Mammary epithelial cell (primary cell): ENCODE measurements at regions of chr12 and their contacts with region 1.

Region 1: GRCh38 chr12:120971299-120972179 is 6.8 kb upstream of the HNF1A start:
- DNase-seq: peak; percentile 50
- H3K4me3 ChIP-seq: no peak overlapping the region
- H3K27ac ChIP-seq: no peak overlapping the region
- H3K4me1 ChIP-seq: no peaks in the 10 kb centered on the region
- H3K27me3 ChIP-seq: no peaks in the 10 kb centered on the region
- CTCF ChIP-seq: peak; percentile 80

Region 2: DNA sequence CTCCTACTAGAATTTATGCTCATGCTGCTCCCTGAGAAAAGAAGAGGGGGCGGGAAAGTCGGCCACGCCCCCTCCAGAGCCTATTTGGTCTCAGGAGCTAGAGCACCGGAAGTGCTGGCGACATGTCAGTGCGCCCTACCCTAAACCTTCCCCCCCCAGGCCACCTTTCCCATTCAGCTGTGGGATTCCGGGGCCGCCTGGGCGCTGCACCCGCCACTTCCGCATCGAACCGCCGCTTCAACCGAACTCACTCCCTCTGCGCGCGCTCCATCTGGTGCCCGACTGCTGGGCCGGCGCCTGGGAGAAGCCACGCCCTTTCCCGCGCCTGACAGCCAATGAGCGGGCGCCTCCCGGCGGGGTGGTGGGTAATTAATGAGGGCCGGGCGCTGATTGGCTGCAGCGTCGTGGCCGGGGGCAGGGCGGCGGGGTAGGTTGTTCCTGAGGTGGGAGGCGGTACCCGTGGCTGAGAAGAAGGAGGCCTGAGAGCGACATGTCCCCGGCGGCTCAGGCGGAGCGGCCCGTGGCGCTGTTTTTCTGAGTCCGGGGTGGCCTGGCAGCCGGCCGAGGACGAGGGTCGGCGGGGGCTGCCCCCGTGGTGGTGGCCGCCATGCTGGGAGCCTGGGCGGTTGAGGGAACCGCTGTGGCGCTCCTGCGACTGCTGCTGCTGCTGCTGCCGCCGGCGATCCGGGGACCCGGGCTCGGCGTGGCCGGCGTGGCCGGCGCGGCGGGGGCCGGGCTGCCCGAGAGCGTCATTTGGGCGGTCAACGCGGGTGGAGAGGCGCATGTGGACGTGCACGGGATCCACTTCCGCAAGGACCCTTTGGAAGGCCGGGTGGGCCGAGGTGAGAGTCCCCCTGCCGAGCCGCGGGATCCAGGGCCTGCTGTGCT is 284.6 kb before region 1 on chr12 and contains the start of gene MLEC:
- CTCF ChIA-PET with region 1: no interaction called
- dilution Hi-C with region 1: no loop called
- in situ Hi-C with region 1: no loop called
- intact Hi-C with region 1: loop called (anchors 1 kb)
- DNase-seq: peak; percentile 98
- H3K4me3 ChIP-seq: peak within 1 kb of the TSS; percentile 73 to 98 (median 82)
- H3K27ac ChIP-seq: peak within 1 kb of the TSS; percentile 89
- H3K4me1 ChIP-seq: peaks cover 28% of the 10 kb centered on the region
- H3K27me3 ChIP-seq: no peaks in the 10 kb centered on the region
- CTCF ChIP-seq: peak in 1 of 2 donors; percentile 24
- total RNA-seq, gene MLEC: 64.7 to 114 TPM

Region 3: GRCh38 chr12:120710031-120710804 is 261.3 kb before region 1 on chr12 and contains the start of gene UNC119B:
- CTCF ChIA-PET with region 1: no interaction called
- dilution Hi-C with region 1: no loop called
- in situ Hi-C with region 1: no loop called
- intact Hi-C with region 1: loop called (anchors 2 kb)
- DNase-seq: peak; percentile 50
- H3K4me3 ChIP-seq: peak within 1 kb of the TSS; percentile 81 to 97 (median 93)
- H3K27ac ChIP-seq: peak within 1 kb of the TSS; percentile 84
- H3K4me1 ChIP-seq: peaks cover 15% of the 10 kb centered on the region
- H3K27me3 ChIP-seq: peaks cover 1% of the 10 kb centered on the region
- CTCF ChIP-seq: no peak
- total RNA-seq, gene UNC119B: 28.0 to 33.3 TPM

Region 4: DNA sequence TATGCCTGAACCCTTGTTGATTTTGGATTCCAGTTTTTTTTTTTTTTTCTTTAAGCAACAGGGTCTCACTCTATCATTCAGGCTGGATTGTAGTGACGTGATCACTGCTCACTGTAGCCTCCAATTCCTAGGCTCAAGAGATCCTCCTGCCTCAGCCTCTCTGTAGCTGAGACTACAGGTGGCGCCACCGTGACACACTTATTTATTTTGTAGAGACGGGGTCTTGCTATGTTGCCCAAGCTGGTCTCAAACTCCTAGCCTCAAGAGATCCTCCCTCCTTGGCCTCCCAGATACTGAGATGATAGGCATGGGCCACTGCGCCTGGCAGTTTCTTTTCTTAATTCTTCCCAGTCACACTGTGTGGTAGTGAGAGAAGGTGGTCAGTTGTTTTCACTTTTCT is 220.7 kb before region 1 on chr12:
- CTCF ChIA-PET with region 1: no interaction called
- dilution Hi-C with region 1: no loop called
- in situ Hi-C with region 1: no loop called
- intact Hi-C with region 1: loop called (anchors 5 kb)
- DNase-seq: no peak
- H3K4me3 ChIP-seq: no peak overlapping the region
- H3K27ac ChIP-seq: no peak overlapping the region
- H3K4me1 ChIP-seq: no peaks in the 10 kb centered on the region
- H3K27me3 ChIP-seq: no peaks in the 10 kb centered on the region
- CTCF ChIP-seq: no peak

Region 5: DNA sequence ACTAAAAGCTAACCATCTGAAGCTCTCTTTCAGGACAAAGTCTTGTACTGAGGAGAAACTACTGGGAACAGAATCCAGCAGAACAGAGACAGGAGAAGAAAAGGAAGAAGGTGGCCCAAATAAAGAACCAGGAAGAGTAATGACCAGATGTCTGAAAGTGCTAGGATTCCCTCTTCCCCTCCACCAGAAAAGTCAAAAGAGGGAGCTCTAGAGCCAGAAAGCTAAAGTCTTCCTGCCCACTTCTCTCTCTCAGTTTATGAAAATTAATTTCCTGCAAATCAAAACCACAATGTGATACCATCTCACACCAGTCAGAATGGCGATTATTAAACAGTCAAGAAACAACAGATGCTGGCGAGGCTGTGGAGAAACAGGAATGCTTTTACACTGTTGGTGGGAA is 114.6 kb before region 1 on chr12:
- CTCF ChIA-PET with region 1: interaction called, 3 read pairs
- dilution Hi-C with region 1: no loop called
- in situ Hi-C with region 1: no loop called
- intact Hi-C with region 1: loop called (anchors 1 kb)
- DNase-seq: peak; percentile 61
- H3K4me3 ChIP-seq: no peak overlapping the region
- H3K27ac ChIP-seq: no peak overlapping the region
- H3K4me1 ChIP-seq: peaks cover 16% of the 10 kb centered on the region
- H3K27me3 ChIP-seq: no peaks in the 10 kb centered on the region
- CTCF ChIP-seq: peak; percentile 25 to 58

Region 6: GRCh38 chr12:120904197-120904773 is 67.3 kb before region 1 on chr12 and contains the start of gene SPPL3:
- CTCF ChIA-PET with region 1: no interaction called
- dilution Hi-C with region 1: no loop called
- in situ Hi-C with region 1: no loop called
- intact Hi-C with region 1: loop called (anchors 2 kb)
- DNase-seq: peak; percentile 77
- H3K4me3 ChIP-seq: peak within 1 kb of the TSS; percentile 61 to 87 (median 86)
- H3K27ac ChIP-seq: peak within 1 kb of the TSS; percentile 61
- H3K4me1 ChIP-seq: peaks cover 30% of the 10 kb centered on the region
- H3K27me3 ChIP-seq: no peaks in the 10 kb centered on the region
- CTCF ChIP-seq: no peak
- total RNA-seq, gene SPPL3: 11.2 to 54.1 TPM

Region 7: DNA sequence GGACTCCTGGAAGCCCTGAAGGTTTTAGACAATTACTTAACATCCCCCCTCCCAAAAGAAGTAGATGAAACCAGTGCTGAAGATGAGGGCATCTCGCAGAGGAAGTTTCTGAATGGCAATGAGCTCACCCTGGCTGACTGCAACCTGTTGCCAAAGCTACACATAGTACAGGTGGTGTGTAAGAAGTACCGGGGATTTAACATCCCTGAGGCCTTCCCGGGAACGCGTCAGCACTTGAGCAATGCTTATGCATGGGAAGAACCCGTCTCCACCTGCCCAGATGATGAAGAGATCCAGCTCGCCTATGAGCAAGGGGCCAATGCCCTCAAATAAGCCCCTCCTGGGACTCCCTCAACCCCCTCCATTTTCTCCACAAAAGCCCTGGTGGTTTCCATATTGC is 56.7 kb before region 1 on chr12:
- CTCF ChIA-PET with region 1: no interaction called
- dilution Hi-C with region 1: no loop called
- in situ Hi-C with region 1: no loop called
- intact Hi-C with region 1: no loop called
- DNase-seq: peak; percentile 98
- H3K4me3 ChIP-seq: no peak overlapping the region
- H3K27ac ChIP-seq: peak overlapping the region; percentile 32
- H3K4me1 ChIP-seq: peaks cover 4% of the 10 kb centered on the region
- H3K27me3 ChIP-seq: no peaks in the 10 kb centered on the region
- CTCF ChIP-seq: no peak

Region 8: GRCh38 chr12:120944645-120945231 is 26.8 kb before region 1 on chr12:
- CTCF ChIA-PET with region 1: no interaction called
- dilution Hi-C with region 1: no loop called
- in situ Hi-C with region 1: no loop called
- intact Hi-C with region 1: loop called (anchors 1 kb)
- DNase-seq: peak; percentile 30
- H3K4me3 ChIP-seq: no peak overlapping the region
- H3K27ac ChIP-seq: no peak overlapping the region
- H3K4me1 ChIP-seq: no peaks in the 10 kb centered on the region
- H3K27me3 ChIP-seq: no peaks in the 10 kb centered on the region
- CTCF ChIP-seq: peak; percentile 81 to 89